AG04449 (cell line): ENCODE measurements at regions of chr16 and their contacts with region 1.

Region 1: DNA sequence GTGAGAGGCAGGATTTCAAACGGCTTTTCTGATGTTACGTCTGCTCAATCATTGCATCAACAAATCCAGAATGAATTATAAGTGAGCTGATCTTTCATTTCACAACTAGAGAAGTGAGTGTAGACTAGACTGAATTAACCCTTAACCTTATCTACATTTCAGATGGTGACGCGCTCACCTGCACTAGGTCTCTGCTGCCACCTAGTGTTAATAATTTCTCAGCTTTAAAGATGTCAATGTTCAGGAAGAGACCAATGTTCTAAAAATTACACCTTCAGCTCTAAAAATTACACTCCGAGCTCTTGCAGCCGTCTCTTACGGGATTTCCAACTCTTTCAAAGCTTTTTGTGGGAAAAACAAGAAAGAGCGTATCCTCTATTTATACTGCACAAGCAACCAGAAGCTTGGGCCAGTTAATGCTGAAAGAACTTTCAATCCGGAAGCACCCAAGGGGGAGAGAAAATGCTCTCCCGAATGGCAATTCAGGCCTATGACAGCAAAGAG is 88.2 kb upstream of the FA2H start:
- DNase-seq: no peak
- H3K4me3 ChIP-seq: no peak overlapping the region
- CTCF ChIP-seq: peak; percentile 56

Region 2: GRCh38 chr16:74709441-74709877 is 153.3 kb before region 1 on chr16:
- CTCF ChIA-PET with region 1: interaction called, 326 read pairs
- POLR2A ChIA-PET with region 1: no interaction called
- DNase-seq: no peak
- H3K4me3 ChIP-seq: no peak overlapping the region
- CTCF ChIP-seq: peak; percentile 93

Region 3: DNA sequence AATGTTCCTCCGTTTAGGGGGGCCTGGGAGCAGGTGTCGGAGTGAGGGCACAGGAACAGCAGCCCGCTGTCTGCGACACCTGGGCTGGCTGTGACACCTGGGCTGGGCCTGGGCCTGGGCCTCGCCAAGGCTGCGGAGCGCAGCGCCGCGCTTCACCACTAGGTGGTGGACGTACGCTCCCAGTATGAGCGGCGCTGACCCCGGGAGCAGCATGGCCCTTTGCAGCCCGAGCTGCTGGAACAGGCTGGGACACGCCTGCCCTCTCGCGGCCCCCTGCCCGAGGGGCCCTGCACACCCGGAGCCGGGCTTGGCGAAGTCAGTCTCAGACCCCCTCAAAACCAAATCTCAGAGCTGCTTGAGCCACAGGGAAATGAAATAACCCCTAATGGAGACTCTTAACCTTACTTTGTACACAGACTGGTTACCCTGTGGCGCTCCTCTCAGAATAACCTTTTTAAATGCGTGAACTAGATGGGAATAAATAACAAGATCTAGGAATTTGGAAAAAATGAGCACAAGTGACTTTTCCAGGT is 49.6 kb before region 1 on chr16:
- CTCF ChIA-PET with region 1: interaction called, 94 read pairs
- POLR2A ChIA-PET with region 1: no interaction called
- DNase-seq: no peak
- H3K4me3 ChIP-seq: no peak overlapping the region
- CTCF ChIP-seq: peak; percentile 97

Region 4: DNA sequence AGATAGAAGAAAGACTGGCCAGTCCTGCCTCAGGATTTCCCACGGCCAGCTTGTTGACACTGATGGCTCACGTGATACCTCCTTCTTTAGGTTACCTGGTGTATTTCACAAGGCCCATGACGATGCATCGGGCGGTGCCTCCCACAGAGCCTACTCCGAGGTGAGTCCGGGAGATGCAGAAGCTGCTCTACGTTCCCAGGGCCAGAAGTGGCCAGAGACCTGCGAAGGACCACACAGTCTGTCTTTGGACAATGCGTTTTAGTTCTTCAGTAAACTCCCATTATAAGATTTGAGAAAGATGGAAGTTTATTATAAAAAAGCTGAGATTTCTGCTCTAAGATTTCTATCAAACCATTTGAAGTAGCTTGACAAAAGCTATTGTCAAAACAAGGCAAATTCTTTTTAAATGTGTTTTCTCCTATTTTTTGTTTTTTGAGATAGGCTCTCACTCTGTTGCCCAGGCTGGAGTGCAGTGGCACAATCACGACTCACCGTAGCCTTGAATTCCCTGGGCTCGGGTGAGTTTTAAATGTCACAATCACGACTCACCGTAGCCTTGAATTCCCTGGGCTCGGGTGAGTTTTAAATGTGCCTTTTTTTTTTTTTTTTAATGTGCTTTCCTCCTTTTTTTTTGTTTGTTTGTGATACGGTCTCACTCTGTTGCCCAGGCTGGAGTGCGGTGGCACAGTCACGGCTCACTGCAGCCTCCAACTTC is 18.9 kb before region 1 on chr16:
- CTCF ChIA-PET with region 1: interaction called, 20 read pairs
- POLR2A ChIA-PET with region 1: no interaction called
- DNase-seq: no peak
- H3K4me3 ChIP-seq: no peak overlapping the region
- CTCF ChIP-seq: no peak

Region 5: DNA sequence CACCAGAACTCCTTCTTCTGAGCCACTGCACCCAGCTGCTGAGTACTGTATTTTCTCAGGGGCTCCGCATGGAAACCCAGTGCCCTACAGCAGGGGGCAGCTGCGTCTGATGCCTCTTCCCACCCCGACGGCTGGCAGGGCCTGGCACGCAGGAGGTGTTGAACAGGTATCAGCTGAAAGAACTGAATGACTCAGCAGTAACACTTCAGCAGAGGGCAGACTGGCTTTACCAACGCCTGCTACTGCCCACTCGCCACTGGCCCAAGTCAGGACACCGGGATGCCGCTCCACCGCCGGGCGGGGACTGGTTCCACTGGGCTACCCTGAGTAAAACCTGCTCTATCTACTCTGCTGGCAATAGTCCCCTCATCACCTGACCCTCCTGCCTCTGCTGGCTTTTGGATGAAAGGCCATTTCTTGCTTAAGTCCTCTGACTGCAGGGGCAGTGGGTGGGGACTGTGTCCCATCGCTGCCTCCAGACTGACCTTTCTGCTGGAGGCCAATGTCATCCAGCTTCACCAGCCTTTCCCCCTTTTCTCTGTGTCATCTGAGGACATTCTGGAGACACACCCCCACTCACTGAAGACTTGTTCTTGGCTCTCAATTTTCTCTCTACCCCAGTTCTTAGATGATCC is 12.2 kb after region 1 on chr16:
- CTCF ChIA-PET with region 1: interaction called, 45 read pairs
- POLR2A ChIA-PET with region 1: no interaction called
- DNase-seq: no peak
- H3K4me3 ChIP-seq: no peak overlapping the region
- CTCF ChIP-seq: no peak

Region 6: GRCh38 chr16:74892574-74893461 is 30.0 kb after region 1 on chr16:
- CTCF ChIA-PET with region 1: interaction called, 10 read pairs
- POLR2A ChIA-PET with region 1: no interaction called
- DNase-seq: no peak
- H3K4me3 ChIP-seq: no peak overlapping the region
- CTCF ChIP-seq: no peak

Region 7: GRCh38 chr16:75130150-75130771 is 267.5 kb after region 1 on chr16:
- CTCF ChIA-PET with region 1: no interaction called
- POLR2A ChIA-PET with region 1: no interaction called
- DNase-seq: no peak
- H3K4me3 ChIP-seq: no peak overlapping the region
- CTCF ChIP-seq: no peak